ENCODE measurements at regions of chr9 and their contacts with region 1.

Region 1: GRCh38 chr9:78115073-78115472 is 83.5 kb upstream of the GNAQ start:
- DNase-seq: no peak
- CTCF ChIP-seq: peak; percentile 26

Region 2: DNA sequence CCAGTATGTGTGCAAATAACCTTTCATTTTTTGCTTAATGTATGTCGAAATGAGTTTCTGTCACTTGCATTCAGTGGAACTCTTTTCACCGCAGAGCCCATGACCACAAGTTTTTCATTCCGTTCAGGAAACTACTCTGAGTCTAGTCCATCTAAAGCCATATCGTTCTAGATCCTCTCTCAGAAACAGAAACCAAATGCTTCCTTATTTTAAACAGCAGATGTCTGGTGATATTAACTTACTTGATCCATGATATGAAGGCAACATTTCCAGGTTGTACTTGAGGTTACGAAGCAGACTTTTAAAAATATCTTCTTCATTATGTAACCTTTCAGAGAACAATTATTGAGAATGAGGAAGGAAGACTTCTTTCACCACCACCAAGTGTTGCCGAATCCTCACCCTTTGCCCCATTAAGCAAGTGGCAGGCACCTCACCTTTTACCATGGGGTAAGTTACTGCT is 11.1 kb before region 1 on chr9:
- CTCF ChIA-PET with region 1: interaction called, 18 read pairs
- POLR2A ChIA-PET with region 1: no interaction called
- DNase-seq: no peak
- CTCF ChIP-seq: no peak

Measured in GM10248 (cell line).